ENCODE measurements at regions of chr18 and their contacts with region 1.

Region 1: DNA sequence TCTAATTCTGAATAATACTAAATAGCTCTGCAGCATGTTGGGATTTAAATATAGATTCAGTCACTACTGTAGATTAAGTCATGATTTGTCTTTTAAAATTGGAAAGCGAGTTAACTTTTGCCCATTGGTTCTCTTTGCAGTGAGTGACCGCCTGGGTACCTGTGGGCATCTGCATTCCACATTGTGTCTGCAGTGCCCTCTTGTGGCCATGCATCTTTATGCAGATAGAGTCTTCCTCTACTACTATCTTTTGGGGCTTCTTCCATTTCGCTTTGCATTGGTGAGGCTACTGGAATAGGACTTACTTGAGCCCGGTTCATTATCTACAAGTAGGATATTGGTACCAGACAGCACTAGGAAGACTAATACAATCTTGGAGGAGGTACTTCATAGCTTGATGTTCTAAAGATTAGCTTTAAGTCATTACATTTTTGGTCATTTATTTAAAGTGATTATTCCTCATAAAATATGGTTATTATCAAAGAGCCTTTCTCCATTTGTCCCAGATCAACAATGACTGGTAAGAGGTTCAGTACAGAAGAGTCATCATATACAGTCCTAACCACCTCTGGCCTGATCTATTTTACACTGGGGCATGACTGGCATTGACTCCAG is 203.0 kb downstream of the SOCS6 start:
- DNase-seq: peak; percentile 62
- H3K4me3 Mint-ChIP-seq: no peak overlapping the region
- H3K27ac Mint-ChIP-seq: no peak overlapping the region
- H3K4me1 Mint-ChIP-seq: no peaks in the 10 kb centered on the region
- H3K27me3 Mint-ChIP-seq: no peaks in the 10 kb centered on the region

Region 2: GRCh38 chr18:70506511-70506910 is 14.7 kb after region 1 on chr18:
- CTCF ChIA-PET with region 1: interaction called, 20 read pairs
- POLR2A ChIA-PET with region 1: no interaction called
- intact Hi-C with region 1: no loop called
- DNase-seq: no peak
- H3K4me3 Mint-ChIP-seq: no peak overlapping the region
- H3K27ac Mint-ChIP-seq: no peak overlapping the region
- H3K4me1 Mint-ChIP-seq: no peaks in the 10 kb centered on the region
- H3K27me3 Mint-ChIP-seq: no peaks in the 10 kb centered on the region

Region 3: GRCh38 chr18:70627182-70627802 is 135.5 kb after region 1 on chr18:
- CTCF ChIA-PET with region 1: no interaction called
- POLR2A ChIA-PET with region 1: no interaction called
- intact Hi-C with region 1: no loop called
- DNase-seq: no peak
- H3K4me3 Mint-ChIP-seq: no peak overlapping the region
- H3K27ac Mint-ChIP-seq: no peak overlapping the region
- H3K4me1 Mint-ChIP-seq: peaks cover 27% of the 10 kb centered on the region
- H3K27me3 Mint-ChIP-seq: no peaks in the 10 kb centered on the region

Region 4: GRCh38 chr18:70892381-70892780 is 400.5 kb after region 1 on chr18:
- CTCF ChIA-PET with region 1: no interaction called
- POLR2A ChIA-PET with region 1: no interaction called
- intact Hi-C with region 1: no loop called
- DNase-seq: no peak
- H3K4me3 Mint-ChIP-seq: no peak overlapping the region
- H3K27ac Mint-ChIP-seq: no peak overlapping the region
- H3K4me1 Mint-ChIP-seq: no peaks in the 10 kb centered on the region
- H3K27me3 Mint-ChIP-seq: no peaks in the 10 kb centered on the region

Measured in activated CD4-positive, alpha-beta memory T cell treated with anti-CD3 and anti-CD28 coated beads for 36 hours (primary cell).